Posterior vena cava (tissue), 2 donors: ENCODE measurements at regions of chr12 and their contacts with region 1.

Region 1: DNA sequence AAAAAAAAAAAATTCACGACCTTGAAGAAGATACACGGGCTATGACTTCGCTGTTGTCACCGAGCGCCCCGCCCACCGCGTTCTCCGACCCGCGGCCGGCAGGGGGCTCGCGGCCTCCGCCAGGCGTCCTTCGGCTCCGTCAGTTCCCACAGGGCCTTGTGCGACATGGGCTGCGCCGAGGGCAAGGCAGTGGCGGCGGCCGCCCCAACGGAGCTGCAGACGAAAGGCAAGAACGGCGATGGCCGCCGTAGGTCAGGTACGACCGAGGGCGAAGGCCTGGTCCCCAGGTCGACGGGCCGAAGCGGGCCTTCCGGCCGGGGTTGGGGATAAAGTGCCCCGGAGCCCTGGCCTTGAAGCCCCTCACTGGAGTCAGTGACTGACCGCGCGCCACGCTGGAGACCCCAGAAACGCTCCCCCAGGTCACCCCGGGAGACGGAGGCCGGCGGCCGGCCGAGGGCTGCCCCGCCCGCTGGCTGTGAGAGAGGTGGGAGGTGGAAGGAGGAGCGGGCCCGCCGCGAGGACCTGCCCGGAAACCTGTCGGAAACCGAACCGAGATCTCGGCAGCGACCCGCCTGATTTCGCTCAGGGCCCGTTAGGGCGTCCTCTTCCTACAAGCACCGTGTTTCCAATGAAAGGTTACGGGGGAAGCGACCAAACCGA is at the start of gene TXNRD1:
- DNase-seq: peak; percentile 95
- total RNA-seq, gene TXNRD1: 107 to 185 TPM

Region 2: GRCh38 chr12:103829092-103829491 is 386.7 kb before region 1 on chr12:
- intact Hi-C with region 1: no loop called
- DNase-seq: no peak

Region 3: GRCh38 chr12:104189915-104190555 is 25.7 kb before region 1 on chr12:
- intact Hi-C with region 1: loop called in 1 of 2 experiments (anchors 1 kb)
- DNase-seq: no peak

Region 4: DNA sequence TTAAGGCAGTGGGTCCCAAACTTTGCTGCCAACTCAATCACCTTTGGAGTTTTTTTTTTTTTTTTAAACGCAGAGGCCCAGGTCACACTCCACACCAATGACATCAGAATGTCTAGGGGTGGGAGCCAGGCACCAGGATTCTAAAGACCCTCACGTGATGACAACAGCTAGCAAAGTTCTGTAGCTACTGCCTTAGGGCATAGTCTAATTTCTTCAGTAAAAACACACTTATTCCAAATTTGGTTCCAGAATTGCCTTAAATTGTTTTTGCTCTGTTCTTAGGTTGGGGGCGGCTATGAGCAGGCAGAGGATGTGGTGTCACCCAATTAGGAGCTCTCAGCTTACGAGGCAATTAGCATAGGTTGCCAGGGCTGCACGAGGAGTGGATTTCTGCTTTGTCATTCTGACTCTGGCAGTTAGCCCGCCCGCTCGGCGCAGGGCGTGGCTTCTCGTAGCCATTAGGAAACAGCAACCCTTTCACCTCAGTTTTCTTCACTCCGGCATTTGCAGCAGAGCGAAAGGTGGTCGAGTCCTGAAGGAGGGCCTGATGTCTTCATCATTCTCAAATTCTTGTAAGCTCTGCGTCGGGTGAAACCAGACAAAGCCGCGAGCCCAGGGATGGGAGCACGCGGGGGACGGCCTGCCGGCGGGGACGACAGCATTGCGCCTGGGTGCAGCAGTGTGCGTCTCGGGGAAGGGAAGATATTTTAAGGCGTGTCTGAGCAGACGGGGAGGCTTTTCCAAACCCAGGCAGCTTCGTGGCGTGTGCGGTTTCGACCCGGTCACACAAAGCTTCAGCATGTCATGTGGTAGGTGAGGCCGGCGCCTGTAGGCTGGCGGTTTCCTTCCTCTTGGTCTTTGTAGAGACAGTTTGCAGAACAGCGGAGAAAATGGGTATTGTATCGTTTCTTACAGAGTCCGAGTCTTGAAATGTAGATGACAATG is 71.0 kb after region 1 on chr12:
- intact Hi-C with region 1: loop called (anchors 5 to 10 kb)
- DNase-seq: peak; percentile 98

Region 5: DNA sequence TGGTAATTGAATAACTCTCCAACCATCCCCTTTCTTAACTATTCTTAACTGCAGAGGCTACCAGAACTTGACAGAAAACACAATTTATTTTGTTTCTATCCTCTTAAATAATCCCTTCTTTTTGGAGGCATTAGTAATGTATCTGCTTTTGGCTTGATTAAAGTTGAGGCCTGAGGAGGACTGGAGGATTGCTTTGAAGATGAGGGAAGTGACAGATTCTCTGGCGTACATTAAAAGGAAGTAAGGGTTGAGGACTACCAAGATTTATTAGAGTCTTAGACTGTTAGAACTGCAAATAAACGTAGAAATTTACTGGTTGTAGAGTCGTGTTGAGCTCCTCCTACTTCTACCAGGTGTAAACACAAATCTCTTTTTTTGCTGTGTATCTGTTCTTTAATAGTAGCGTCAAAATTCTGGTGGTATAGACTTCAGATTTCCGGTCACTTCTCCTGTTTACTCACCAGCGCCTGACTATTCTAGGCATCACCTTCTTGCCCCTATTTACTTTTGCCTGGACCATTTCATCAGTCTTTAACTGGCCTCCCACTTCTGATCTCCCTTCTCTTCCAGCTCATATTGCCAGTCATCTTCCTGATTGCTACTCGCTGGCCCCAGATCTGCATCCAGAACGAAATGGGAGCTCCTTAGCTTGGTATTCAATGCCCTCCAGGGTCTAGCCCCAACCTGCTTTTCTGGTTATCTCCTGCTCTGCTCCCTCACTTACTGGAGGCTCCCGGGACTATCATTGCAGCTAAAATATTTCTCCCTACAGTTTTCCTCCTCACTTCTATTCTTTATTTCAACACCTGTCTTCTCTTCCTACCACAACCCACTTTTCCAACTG is 79.3 kb after region 1 on chr12:
- intact Hi-C with region 1: loop called in 1 of 2 experiments (anchors 10 kb)
- DNase-seq: no peak